Panc1 (cell line): ENCODE measurements at regions of chr1 and their contacts with region 1.

Region 1: DNA sequence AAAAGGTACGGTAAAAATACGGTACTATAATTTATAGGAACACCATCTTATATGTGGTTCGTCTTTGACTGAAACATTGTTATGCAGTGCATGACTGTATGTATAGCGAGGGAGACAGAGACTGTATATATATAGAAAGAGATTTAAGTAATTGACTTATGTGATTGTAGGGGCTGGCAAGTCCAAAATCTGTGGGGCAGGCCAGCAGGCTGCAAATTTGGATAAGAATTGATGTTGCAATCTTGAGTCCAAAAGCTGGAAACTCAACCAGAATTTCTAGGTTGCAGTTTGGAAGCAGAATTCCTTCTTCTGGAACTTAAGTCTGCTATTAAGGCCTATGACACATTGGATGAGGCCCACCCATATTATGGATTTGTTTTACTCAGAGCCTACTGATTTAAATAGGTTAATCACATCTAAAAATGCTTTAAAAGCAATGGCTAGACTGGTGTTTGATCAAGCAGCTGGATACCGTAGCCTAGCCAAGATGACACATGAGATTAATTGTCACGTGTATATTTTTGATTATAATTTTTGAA is 42.0 kb downstream of the LAMC1 start:
- DNase-seq: no peak
- ATAC-seq: no peak
- H3K4me3 ChIP-seq: no peak overlapping the region
- H3K27ac ChIP-seq: no peak overlapping the region
- H3K4me1 ChIP-seq: peaks cover 21% of the 10 kb centered on the region
- H3K27me3 ChIP-seq: no peaks in the 10 kb centered on the region
- CTCF ChIP-seq: no peak

Region 2: GRCh38 chr1:183019860-183020259 is 45.4 kb before region 1 on chr1:
- CTCF ChIA-PET with region 1: no interaction called
- POLR2A ChIA-PET with region 1: no interaction called
- in situ Hi-C with region 1: no loop called
- intact Hi-C with region 1: no loop called
- DNase-seq: no peak
- ATAC-seq: no peak
- H3K4me3 ChIP-seq: no peak overlapping the region
- H3K27ac ChIP-seq: no peak overlapping the region
- H3K4me1 ChIP-seq: peaks cover 27% of the 10 kb centered on the region
- H3K27me3 ChIP-seq: no peaks in the 10 kb centered on the region
- CTCF ChIP-seq: peak; percentile 39; the same call in 1 of the 2 replicates

Region 3: DNA sequence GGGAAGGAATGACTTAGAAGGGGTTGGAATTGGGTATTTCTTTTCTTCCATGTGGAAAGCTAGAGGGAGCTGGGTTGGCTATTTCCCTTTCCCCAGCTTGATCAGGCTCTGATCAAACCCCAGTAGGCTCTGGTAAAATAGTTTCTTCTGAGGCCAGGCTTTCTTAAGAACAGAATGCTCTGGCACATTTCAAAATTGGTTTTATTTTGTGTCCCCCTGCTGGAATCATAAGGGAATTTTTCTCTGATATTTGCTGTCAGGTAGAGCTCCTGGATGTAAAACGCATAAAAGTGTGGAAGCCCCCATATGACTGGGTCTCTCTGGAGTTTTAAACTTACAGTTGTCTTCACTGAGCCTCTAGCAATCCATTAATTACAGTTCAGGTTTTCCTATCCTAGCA is 604.9 kb after region 1 on chr1:
- CTCF ChIA-PET with region 1: interaction called, 10 read pairs
- POLR2A ChIA-PET with region 1: no interaction called
- in situ Hi-C with region 1: no loop called
- intact Hi-C with region 1: no loop called
- DNase-seq: no peak
- ATAC-seq: no peak
- H3K4me3 ChIP-seq: no peak overlapping the region
- H3K27ac ChIP-seq: no peak overlapping the region
- H3K4me1 ChIP-seq: no peaks in the 10 kb centered on the region
- H3K27me3 ChIP-seq: no peaks in the 10 kb centered on the region; the same call in 1 of the 2 replicates
- CTCF ChIP-seq: 0 out of 2 replicates have a peak, but pooled peaks have one; percentile 12